HCT116 (cell line): ENCODE measurements at regions of chr2 and their contacts with region 1.

Region 1: GRCh38 chr2:159712143-159712928 is at the start of gene MARCHF7:
- DNase-seq: peak; percentile 89
- ATAC-seq: peak; percentile 94
- H3K4me3 ChIP-seq: peak within 1 kb of the TSS; percentile 96 to 98
- H3K27ac ChIP-seq: peak within 1 kb of the TSS; percentile 93
- H3K4me1 ChIP-seq: peaks cover 8 to 25% of the 10 kb centered on the region in 2 experiments; a peak in 3 of 4 replicates
- H3K27me3 ChIP-seq: no peaks in the 10 kb centered on the region
- CTCF ChIP-seq: peak; percentile 48 to 63 (median 57); a peak in 5 of 6 replicates
- POLR2A ChIP-seq: peak; percentile 48
- RAD21 ChIP-seq: peak; percentile 90
- total RNA-seq, gene MARCHF7: 65.9 TPM

Region 2: DNA sequence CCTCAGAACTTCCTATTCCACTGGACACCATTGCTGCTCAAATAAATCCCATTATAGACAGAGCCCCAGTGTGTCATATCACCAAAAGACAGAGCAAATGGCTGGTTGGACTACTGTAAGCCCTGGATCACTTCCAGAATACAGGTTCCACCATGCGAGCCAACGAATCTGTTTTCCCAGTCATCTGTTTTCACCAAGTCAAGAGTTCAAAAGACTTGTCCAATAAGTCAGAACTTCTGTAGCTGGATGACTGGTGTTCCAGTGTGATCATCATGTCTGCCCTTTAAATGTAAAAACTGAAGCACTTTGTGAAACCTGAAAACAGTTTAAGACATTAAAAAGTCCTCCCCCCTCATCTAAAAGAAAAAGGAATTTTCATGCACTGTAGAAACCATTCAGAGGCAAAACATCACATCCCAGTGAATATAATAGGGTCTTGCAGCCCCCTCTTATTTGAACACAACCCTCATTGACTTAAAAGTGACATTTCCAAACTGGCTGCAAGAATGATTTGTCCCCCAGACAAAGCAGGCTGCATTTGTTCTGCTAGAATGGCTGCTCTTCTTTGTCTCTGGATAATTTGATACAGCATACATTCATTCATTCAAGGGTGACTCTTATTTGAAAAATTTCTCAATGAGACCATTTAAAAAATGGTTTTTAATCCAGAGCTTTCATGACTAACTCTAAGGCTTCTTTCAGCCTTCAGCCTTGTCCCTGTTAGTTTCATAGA is 808.5 kb before region 1 on chr2:
- CTCF ChIA-PET with region 1: no interaction called
- POLR2A ChIA-PET with region 1: no interaction called
- RAD21 ChIA-PET with region 1: no interaction called
- intact Hi-C with region 1: loop called (anchors 10 kb)
- DNase-seq: no peak
- ATAC-seq: no peak
- H3K4me3 ChIP-seq: no peak overlapping the region
- H3K27ac ChIP-seq: no peak overlapping the region
- H3K4me1 ChIP-seq: peaks cover 0 to 4% of the 10 kb centered on the region in 2 experiments; a peak in 1 of 4 replicates
- H3K27me3 ChIP-seq: no peaks in the 10 kb centered on the region
- CTCF ChIP-seq: no peak
- POLR2A ChIP-seq: no peak
- RAD21 ChIP-seq: no peak

Region 3: GRCh38 chr2:159249984-159250715 is 462.2 kb before region 1 on chr2:
- CTCF ChIA-PET with region 1: no interaction called
- POLR2A ChIA-PET with region 1: no interaction called
- RAD21 ChIA-PET with region 1: no interaction called
- intact Hi-C with region 1: loop called (anchors 10 kb)
- DNase-seq: peak; percentile 84
- ATAC-seq: peak; percentile 89
- H3K4me3 ChIP-seq: no peak overlapping the region
- H3K27ac ChIP-seq: peak overlapping the region; percentile 28; the same call in 1 of the 2 replicates
- H3K4me1 ChIP-seq: peaks cover 15 to 25% of the 10 kb centered on the region in 2 experiments
- H3K27me3 ChIP-seq: no peaks in the 10 kb centered on the region
- CTCF ChIP-seq: no peak
- POLR2A ChIP-seq: no peak
- RAD21 ChIP-seq: peak; percentile 46

Region 4: DNA sequence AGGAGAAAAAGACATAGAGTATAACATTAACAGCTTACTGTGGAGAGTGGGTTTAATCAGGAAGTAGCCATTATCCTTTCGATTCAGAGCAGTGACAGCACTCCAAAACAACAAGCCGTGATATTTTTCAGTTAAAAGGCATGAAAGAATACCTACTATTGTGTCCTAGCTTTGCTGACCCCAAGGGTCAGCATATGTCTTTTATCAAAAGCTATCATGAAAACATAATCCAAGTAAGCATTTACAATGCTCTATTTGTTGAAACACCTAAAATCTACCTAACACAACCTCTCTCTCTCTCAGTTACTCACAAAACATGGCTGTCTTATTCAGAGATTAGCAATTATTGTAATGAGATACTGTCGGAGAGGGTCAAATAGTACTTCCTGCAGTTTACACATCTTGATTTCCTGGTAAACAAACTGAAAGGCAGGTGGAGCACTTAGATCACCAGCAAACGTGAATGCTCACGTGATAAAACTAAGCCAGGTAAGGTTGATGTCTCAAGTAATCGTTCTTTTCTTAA is 196.0 kb before region 1 on chr2:
- CTCF ChIA-PET with region 1: no interaction called
- POLR2A ChIA-PET with region 1: no interaction called
- RAD21 ChIA-PET with region 1: no interaction called
- intact Hi-C with region 1: loop called (anchors 5 kb)
- DNase-seq: peak; percentile 78
- ATAC-seq: peak; percentile 98
- H3K4me3 ChIP-seq: peak overlapping the region; percentile 54 to 67
- H3K27ac ChIP-seq: peak overlapping the region; percentile 40; the same call in 1 of the 2 replicates
- H3K4me1 ChIP-seq: peaks cover 7 to 8% of the 10 kb centered on the region in 2 experiments; a peak in 3 of 4 replicates
- H3K27me3 ChIP-seq: no peaks in the 10 kb centered on the region
- CTCF ChIP-seq: peak in 1 of 3 experiments; percentile 36; a peak in 2 of 6 replicates
- POLR2A ChIP-seq: peak; percentile 28
- RAD21 ChIP-seq: peak; percentile 78

Region 5: GRCh38 chr2:159549234-159549633 is 163.1 kb before region 1 on chr2:
- CTCF ChIA-PET with region 1: no interaction called
- POLR2A ChIA-PET with region 1: no interaction called
- RAD21 ChIA-PET with region 1: no interaction called
- intact Hi-C with region 1: no loop called
- DNase-seq: no peak
- ATAC-seq: no peak
- H3K4me3 ChIP-seq: no peak overlapping the region
- H3K27ac ChIP-seq: no peak overlapping the region
- H3K4me1 ChIP-seq: no peaks in the 10 kb centered on the region
- H3K27me3 ChIP-seq: no peaks in the 10 kb centered on the region
- CTCF ChIP-seq: no peak
- POLR2A ChIP-seq: no peak
- RAD21 ChIP-seq: no peak

Region 6: GRCh38 chr2:159615140-159615951 is 97.0 kb before region 1 on chr2:
- CTCF ChIA-PET with region 1: no interaction called
- POLR2A ChIA-PET with region 1: interaction called, 4 read pairs
- RAD21 ChIA-PET with region 1: interaction called in 1 of 2 experiments, 4 read pairs
- intact Hi-C with region 1: loop called (anchors 5 kb)
- DNase-seq: peak; percentile 46
- ATAC-seq: peak; percentile 89
- H3K4me3 ChIP-seq: peak overlapping the region; percentile 60 to 70
- H3K27ac ChIP-seq: peak overlapping the region; percentile 63
- H3K4me1 ChIP-seq: peaks cover 10 to 19% of the 10 kb centered on the region in 2 experiments; a peak in 3 of 4 replicates
- H3K27me3 ChIP-seq: no peaks in the 10 kb centered on the region
- CTCF ChIP-seq: no peak
- POLR2A ChIP-seq: no peak
- RAD21 ChIP-seq: no peak